Calu3 (cell line): ENCODE measurements at regions of chr4 and their contacts with region 1.

Region 1: DNA sequence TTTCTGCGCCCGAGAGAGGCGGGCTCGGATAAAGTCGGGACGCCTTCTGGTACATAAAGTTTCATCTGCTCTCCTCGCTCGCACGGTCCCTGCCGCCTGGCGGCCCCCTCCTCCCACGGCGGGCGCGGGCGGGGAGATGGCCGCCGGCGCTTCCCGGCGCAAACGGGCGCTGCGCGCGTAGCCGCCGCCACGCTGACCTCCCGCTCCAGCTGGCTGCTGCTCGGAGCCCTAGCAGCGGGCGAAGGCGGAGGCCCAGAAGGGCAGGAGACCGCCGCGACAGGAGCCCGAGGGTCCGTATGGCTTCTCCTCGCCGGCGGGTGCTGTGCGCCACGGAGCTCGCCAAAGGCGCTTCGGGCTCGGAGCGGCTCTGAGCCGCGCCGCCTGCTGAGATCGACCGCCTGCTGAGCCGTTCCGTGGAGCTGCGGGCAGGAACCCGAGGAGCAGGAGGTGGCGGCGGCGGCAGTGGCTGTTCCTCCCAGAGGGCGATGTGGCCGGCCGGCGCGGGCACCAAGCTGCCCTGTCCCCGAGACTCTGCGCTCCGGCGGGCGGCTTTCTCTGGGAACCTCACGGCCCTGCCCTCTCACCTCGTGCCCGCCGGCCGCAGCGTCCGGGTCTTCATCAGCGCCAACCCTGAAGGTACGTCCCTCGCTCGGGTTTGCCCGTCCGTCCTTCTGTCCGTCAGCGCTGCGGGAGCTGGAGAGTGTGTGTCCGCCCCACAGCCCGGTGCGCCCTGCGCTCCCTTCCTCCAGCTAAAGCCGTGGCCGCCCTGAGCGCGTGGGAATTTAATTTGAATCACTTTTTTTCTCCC is at the start of gene NWD2:
- DNase-seq: peak; percentile 51
- H3K4me3 Mint-ChIP-seq: peak within 1 kb of the TSS; percentile 87
- H3K27ac Mint-ChIP-seq: peak within 1 kb of the TSS; percentile 72
- H3K4me1 Mint-ChIP-seq: peaks cover 8% of the 10 kb centered on the region
- H3K27me3 Mint-ChIP-seq: no peaks in the 10 kb centered on the region
- CTCF ChIP-seq: peak; percentile 24
- total RNA-seq, gene NWD2: 1.4 TPM in 2 replicates

Region 2: DNA sequence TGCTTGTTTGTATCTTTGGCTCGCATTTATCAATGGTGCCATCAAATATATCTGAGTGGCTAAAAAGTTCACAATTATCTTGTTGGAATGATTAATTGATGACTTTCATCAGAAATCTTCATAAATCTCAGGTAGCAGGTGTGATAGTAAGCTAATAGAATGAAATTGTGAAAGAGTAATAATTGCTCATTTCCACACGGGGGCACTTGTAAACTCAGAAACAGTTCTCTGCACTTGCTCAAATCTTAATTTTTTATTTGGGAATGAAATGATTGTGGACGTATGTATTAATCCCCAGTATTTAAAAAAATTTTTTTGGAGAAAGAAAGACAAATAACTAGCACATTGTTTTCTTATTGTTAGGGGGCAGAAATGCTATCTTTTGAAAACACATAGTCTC is 830.5 kb before region 1 on chr4:
- CTCF ChIA-PET with region 1: no interaction called
- intact Hi-C with region 1: loop called (anchors 10 kb)
- DNase-seq: no peak
- H3K4me3 Mint-ChIP-seq: no peak overlapping the region
- H3K27ac Mint-ChIP-seq: no peak overlapping the region
- H3K4me1 Mint-ChIP-seq: no peaks in the 10 kb centered on the region
- H3K27me3 Mint-ChIP-seq: peaks cover 41% of the 10 kb centered on the region
- CTCF ChIP-seq: peak; percentile 14

Region 3: GRCh38 chr4:37324546-37324945 is 79.8 kb after region 1 on chr4:
- CTCF ChIA-PET with region 1: interaction called, 9 read pairs
- intact Hi-C with region 1: loop called (anchors 5 kb)
- DNase-seq: no peak
- H3K4me3 Mint-ChIP-seq: no peak overlapping the region
- H3K27ac Mint-ChIP-seq: no peak overlapping the region
- H3K4me1 Mint-ChIP-seq: peaks cover 47% of the 10 kb centered on the region
- H3K27me3 Mint-ChIP-seq: no peaks in the 10 kb centered on the region
- CTCF ChIP-seq: no peak

Region 4: DNA sequence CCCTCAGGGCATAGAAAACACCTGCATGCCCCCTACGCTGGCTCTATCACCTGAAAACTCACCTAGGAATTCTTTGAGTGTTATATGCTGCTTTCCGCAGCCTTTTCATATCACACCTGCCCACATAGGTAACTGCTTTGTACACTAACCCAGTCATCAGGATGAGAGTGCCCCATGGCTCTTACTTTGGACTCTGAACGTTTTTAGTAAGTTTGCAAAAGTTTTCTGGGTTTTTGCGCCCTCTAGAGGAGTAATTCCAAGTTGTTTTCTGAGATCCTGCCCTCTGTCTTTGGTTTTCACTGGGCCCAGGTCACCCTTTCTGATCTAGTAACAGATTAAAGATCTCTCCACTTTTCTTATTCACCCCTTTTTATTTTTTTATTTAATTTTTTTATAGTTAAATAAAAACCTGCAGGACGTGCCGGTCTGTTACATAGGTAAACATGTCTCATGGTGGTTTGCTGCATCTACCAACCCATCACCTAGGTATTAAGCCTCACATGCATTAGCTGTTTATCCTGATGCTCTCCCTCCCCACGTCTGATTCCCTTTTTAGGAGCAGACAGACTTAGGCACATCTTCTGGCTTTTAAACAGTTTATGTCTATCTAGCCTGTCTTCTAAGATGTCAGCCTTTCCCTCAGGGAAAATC is 138.9 kb after region 1 on chr4:
- CTCF ChIA-PET with region 1: interaction called, 5 read pairs
- intact Hi-C with region 1: loop called (anchors 2 kb)
- DNase-seq: peak; percentile 52
- H3K4me3 Mint-ChIP-seq: no peak overlapping the region
- H3K27ac Mint-ChIP-seq: no peak overlapping the region
- H3K4me1 Mint-ChIP-seq: peaks cover 10% of the 10 kb centered on the region
- H3K27me3 Mint-ChIP-seq: no peaks in the 10 kb centered on the region
- CTCF ChIP-seq: peak; percentile 43